CD8-positive, alpha-beta memory T cell (primary cell): ENCODE measurements at regions of chr6 and their contacts with region 1.

Region 1: GRCh38 chr6:33356295-33356694 is 35.3 kb upstream of the KIFC1 start:
- DNase-seq: no peak
- H3K4me3 ChIP-seq: no peak overlapping the region
- H3K4me3 Mint-ChIP-seq: no peak overlapping the region
- H3K27ac ChIP-seq: no peak overlapping the region
- H3K27ac Mint-ChIP-seq: no peak overlapping the region
- H3K4me1 ChIP-seq: no peaks in the 10 kb centered on the region
- H3K4me1 Mint-ChIP-seq: no peaks in the 10 kb centered on the region
- H3K27me3 ChIP-seq: no peaks in the 10 kb centered on the region
- H3K27me3 Mint-ChIP-seq: no peaks in the 10 kb centered on the region

Region 2: DNA sequence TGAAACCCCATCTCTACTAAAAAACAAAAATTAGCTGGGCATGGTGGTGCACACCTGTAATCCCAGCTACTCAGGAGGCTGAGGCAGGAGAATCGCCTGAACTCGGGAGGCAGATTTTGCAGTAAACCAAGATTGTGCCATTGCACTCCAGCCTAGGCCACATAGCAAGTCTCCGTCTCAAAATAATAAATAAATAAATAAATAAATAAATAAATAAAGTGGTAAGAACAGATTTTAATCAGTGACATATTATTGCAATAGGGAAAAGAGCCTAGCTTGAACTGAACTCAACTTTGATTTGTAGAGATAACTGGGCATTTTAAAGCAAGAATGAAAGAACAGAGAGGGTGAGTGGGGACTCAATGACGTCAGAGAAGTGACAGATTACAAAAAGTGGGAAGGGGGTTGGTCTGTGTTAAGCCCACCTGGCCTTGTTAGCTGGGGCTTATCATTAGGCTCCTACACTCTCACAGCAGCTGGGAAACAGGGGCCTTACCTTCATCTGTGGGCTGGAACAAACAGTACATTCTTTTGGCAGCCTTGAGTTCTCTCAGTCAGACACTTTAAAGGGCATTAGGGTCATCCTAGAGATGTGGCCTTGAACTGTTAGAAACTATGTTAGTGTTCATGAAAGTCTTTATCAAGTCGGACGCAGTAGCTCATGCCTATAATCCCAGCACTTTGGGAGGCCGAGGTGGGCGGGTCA is 10.9 kb after region 1 on chr6:
- CTCF ChIA-PET with region 1: interaction called, 3 read pairs
- POLR2A ChIA-PET with region 1: interaction called, 11 read pairs
- DNase-seq: no peak
- H3K4me3 ChIP-seq: no peak overlapping the region
- H3K4me3 Mint-ChIP-seq: no peak overlapping the region
- H3K27ac ChIP-seq: no peak overlapping the region
- H3K27ac Mint-ChIP-seq: peak overlapping the region in 1 of 8 donors; percentile 4
- H3K4me1 ChIP-seq: no peaks in the 10 kb centered on the region
- H3K4me1 Mint-ChIP-seq: no peaks in the 10 kb centered on the region
- H3K27me3 ChIP-seq: no peaks in the 10 kb centered on the region
- H3K27me3 Mint-ChIP-seq: peaks cover 0 to 1% of the 10 kb centered on the region in 2 donors